ENCODE measurements at regions of chr6 and their contacts with region 1.

Region 1: DNA sequence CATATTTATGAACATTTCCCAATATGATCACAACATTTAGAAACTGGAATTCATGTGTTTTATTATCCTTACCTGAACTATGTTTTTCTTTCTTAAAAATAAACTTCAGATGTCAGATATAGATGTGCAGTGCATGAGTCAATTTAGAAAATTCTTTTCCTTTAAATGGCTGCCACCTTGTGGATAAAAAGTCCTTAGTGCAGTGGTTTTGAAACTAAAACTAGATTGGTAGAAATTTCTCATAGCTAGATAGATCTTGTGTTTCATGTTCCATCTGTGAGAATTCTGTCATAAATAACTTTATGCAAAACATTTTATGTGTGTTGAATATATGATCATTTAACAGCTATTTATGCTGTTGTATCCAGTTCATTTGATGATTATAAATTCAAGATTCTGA is 134.9 kb downstream of the KLHL32 start:
- DNase-seq: no peak
- H3K4me3 ChIP-seq: no peak overlapping the region
- H3K27ac ChIP-seq: no peak overlapping the region
- H3K4me1 ChIP-seq: no peaks in the 10 kb centered on the region
- H3K27me3 ChIP-seq: no peaks in the 10 kb centered on the region
- CTCF ChIP-seq: peak; percentile 44 to 53 (median 46)
- EP300 ChIP-seq: no peak
- POLR2A ChIP-seq: no peak

Region 2: GRCh38 chr6:96626759-96627364 is 432.6 kb before region 1 on chr6:
- in situ Hi-C with region 1: loop called in 3 of 4 experiments (anchors 5 to 10 kb)
- intact Hi-C with region 1: loop called (anchors 10 kb)
- DNase-seq: no peak
- H3K4me3 ChIP-seq: no peak overlapping the region
- H3K27ac ChIP-seq: no peak overlapping the region
- H3K4me1 ChIP-seq: no peaks in the 10 kb centered on the region
- H3K27me3 ChIP-seq: no peaks in the 10 kb centered on the region
- CTCF ChIP-seq: peak in 4 of 5 experiments; percentile 29 to 42 (median 38)
- EP300 ChIP-seq: no peak
- POLR2A ChIP-seq: no peak

Region 3: GRCh38 chr6:96907498-96907897 is 152.0 kb before region 1 on chr6:
- in situ Hi-C with region 1: loop called in 3 of 4 experiments (anchors 5 to 10 kb)
- intact Hi-C with region 1: no loop called
- DNase-seq: no peak
- H3K4me3 ChIP-seq: no peak overlapping the region
- H3K27ac ChIP-seq: no peak overlapping the region
- H3K4me1 ChIP-seq: peaks cover 0 to 6% (median 0%) of the 10 kb centered on the region in 4 donors
- H3K27me3 ChIP-seq: peaks cover 7% of the 10 kb centered on the region
- CTCF ChIP-seq: no peak
- EP300 ChIP-seq: no peak
- POLR2A ChIP-seq: no peak

Region 4: GRCh38 chr6:96990462-96990861 is 69.0 kb before region 1 on chr6:
- in situ Hi-C with region 1: no loop called
- intact Hi-C with region 1: no loop called
- DNase-seq: no peak
- H3K4me3 ChIP-seq: no peak overlapping the region
- H3K27ac ChIP-seq: no peak overlapping the region
- H3K4me1 ChIP-seq: no peaks in the 10 kb centered on the region
- H3K27me3 ChIP-seq: no peaks in the 10 kb centered on the region
- CTCF ChIP-seq: no peak
- EP300 ChIP-seq: no peak
- POLR2A ChIP-seq: no peak

Measured in transverse colon (tissue), 4 donors.